Endothelial cell of umbilical vein (primary cell): ENCODE measurements at regions of chr9 and their contacts with region 1.

Region 1: DNA sequence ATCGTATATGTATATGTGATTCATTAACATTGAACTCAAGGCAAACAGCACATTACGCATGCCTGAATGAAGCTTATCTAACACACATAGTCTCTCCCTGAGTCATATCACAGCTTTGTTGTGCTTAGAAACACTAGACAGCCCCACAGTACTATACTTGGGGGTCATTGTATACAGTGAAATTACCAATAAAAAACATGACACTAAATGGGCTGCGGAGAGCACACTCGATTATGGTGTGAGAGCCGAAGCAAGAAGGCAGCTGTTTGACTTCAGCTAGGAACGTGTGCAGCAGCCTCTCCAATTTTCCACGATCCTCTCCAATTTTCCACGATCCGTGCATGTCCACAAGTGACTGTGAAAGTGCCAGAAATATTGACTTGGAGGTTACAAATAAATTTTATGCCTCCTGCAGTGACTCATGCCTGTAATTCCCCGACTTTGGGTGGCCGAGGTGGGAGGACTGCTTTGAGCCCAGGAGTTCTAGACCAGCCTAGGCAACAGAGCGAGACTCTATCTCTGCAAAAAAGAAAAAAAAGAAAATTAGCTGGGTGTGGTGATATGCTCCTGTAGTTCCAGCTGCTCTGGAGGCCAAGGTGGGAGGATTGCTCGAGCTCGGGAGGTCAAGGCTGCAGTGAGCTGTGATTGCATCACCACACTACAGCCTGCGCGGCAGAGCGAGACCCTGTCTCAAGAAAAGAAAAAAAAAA is 102.4 kb downstream of the DAPK1 start:
- DNase-seq: peak; percentile 95
- H3K4me3 ChIP-seq: peak overlapping the region in 1 of 3 experiments; percentile 24
- H3K27ac ChIP-seq: peak overlapping the region; percentile 64
- H3K4me1 ChIP-seq: peaks cover 20% of the 10 kb centered on the region
- H3K27me3 ChIP-seq: no peaks in the 10 kb centered on the region
- CTCF ChIP-seq: no peak
- POLR2A ChIP-seq: no peak

Region 2: GRCh38 chr9:87547667-87548066 is 52.4 kb before region 1 on chr9:
- CTCF ChIA-PET with region 1: no interaction called
- POLR2A ChIA-PET with region 1: no interaction called
- dilution Hi-C with region 1: no loop called
- intact Hi-C with region 1: loop called (anchors 2 kb)
- DNase-seq: no peak
- H3K4me3 ChIP-seq: no peak overlapping the region
- H3K27ac ChIP-seq: no peak overlapping the region
- H3K4me1 ChIP-seq: peaks cover 24% of the 10 kb centered on the region
- H3K27me3 ChIP-seq: no peaks in the 10 kb centered on the region
- CTCF ChIP-seq: no peak
- POLR2A ChIP-seq: no peak

Region 3: DNA sequence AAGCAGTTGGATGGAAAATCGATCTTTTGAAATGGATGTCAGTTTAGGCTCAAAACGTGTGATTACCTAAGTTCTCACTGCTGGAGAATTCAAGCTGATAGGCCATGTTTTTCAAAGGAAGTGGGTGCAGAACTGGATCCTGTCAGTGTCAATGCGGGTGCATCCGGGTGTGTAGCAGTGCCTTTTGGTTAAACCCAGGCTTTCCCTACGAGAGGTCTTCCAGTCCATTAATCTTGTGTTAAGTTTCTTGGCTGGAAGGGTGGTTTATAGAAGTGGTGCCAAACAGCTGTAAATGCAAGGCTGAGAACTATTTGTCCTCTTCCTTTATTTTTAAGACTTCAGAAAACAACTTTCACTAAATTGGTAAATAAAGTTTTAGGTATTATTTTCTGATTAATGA is 30.5 kb before region 1 on chr9:
- CTCF ChIA-PET with region 1: interaction called, 8 read pairs
- POLR2A ChIA-PET with region 1: no interaction called
- dilution Hi-C with region 1: no loop called
- intact Hi-C with region 1: loop called (anchors 2 kb)
- DNase-seq: peak; percentile 95
- H3K4me3 ChIP-seq: peak overlapping the region in 1 of 3 experiments; percentile 21
- H3K27ac ChIP-seq: peak overlapping the region; percentile 19
- H3K4me1 ChIP-seq: peaks cover 30% of the 10 kb centered on the region
- H3K27me3 ChIP-seq: no peaks in the 10 kb centered on the region
- CTCF ChIP-seq: no peak
- POLR2A ChIP-seq: peak; percentile 68

Region 4: DNA sequence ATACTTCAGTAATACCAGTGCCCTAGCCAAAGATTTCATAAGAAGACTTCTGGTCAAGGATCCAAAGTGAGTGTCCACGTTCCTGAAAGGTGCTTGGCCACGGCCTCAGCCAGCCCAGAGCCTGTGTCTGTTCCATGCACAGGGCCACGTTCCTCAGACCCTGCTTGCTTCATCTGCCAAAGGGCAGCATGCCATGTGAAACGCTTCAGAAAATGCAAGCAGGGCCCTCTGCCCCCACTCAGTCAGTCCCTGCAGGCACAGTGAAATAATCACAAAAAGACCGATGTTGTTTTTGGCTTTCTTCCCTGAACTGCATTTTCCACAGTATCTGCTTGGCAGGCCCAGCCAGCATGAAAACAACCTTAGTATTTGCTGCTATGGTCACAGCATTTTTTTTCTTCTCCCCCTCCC is 40.3 kb after region 1 on chr9:
- CTCF ChIA-PET with region 1: no interaction called
- POLR2A ChIA-PET with region 1: no interaction called
- dilution Hi-C with region 1: no loop called
- intact Hi-C with region 1: loop called (anchors 2 kb)
- DNase-seq: peak; percentile 97
- H3K4me3 ChIP-seq: no peak overlapping the region
- H3K27ac ChIP-seq: no peak overlapping the region
- H3K4me1 ChIP-seq: peaks cover 10% of the 10 kb centered on the region
- H3K27me3 ChIP-seq: no peaks in the 10 kb centered on the region
- CTCF ChIP-seq: no peak
- POLR2A ChIP-seq: no peak

Region 5: GRCh38 chr9:87766703-87767102 is 166.6 kb after region 1 on chr9:
- CTCF ChIA-PET with region 1: no interaction called
- POLR2A ChIA-PET with region 1: no interaction called
- dilution Hi-C with region 1: no loop called
- intact Hi-C with region 1: no loop called
- DNase-seq: no peak
- H3K4me3 ChIP-seq: no peak overlapping the region
- H3K27ac ChIP-seq: no peak overlapping the region
- H3K4me1 ChIP-seq: no peaks in the 10 kb centered on the region
- H3K27me3 ChIP-seq: peaks cover 2 to 3% of the 10 kb centered on the region in 2 experiments
- CTCF ChIP-seq: no peak
- POLR2A ChIP-seq: no peak